CD4-positive, alpha-beta T cell (primary cell): ENCODE measurements at regions of chr2 and their contacts with region 1.

Region 1: GRCh38 chr2:222903234-222904220 is 42.7 kb downstream of the ACSL3 start:
- DNase-seq: peak in 9 of 14 experiments; percentile 1 to 65 (median 17)
- ATAC-seq: peak; percentile 60
- H3K4me3 ChIP-seq: no peak overlapping the region
- H3K4me3 Mint-ChIP-seq: no peak overlapping the region
- H3K27ac ChIP-seq: no peak overlapping the region
- H3K27ac Mint-ChIP-seq: peak overlapping the region; percentile 13
- H3K4me1 ChIP-seq: no peaks in the 10 kb centered on the region
- H3K4me1 Mint-ChIP-seq: peaks cover 45% of the 10 kb centered on the region
- H3K27me3 ChIP-seq: no peaks in the 10 kb centered on the region
- H3K27me3 Mint-ChIP-seq: no peaks in the 10 kb centered on the region
- CTCF ChIP-seq: peak; percentile 69

Region 2: DNA sequence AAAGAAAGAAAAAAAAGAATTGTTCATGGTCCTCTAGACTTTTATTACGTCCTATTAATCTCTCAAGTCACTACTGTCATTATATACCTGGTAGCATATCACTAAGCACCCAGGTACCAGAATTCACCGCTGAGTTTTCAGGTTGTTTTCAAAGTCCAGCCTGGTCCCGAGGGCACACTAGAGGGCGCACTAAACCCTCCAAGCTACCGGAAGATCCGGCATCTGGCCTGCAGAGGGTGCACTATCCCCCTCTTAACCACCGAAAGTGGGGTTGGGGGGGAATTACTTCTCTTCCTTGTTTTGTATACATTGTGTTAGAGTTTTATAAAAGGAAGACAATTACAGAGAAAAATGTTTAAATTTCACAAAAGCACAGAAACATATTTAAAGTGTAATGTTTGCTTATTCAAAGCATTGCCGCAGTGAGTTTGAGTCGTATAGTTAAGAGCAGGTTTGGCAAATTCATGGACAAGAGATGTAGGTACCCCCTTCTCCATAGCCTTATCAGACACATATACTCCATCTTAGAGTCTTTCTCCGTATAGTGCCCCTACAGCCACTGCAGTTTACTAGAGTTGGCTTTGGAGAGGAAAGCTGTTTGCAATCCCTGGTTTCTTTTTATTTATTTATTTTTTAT is 212.8 kb before region 1 on chr2:
- CTCF ChIA-PET with region 1: interaction called, 6 read pairs
- POLR2A ChIA-PET with region 1: no interaction called
- intact Hi-C with region 1: loop called in 1 of 2 experiments (anchors 1 kb)
- DNase-seq: peak; percentile 52 to 86 (median 64)
- ATAC-seq: peak; percentile 99
- H3K4me3 ChIP-seq: no peak overlapping the region
- H3K4me3 Mint-ChIP-seq: no peak overlapping the region
- H3K27ac ChIP-seq: no peak overlapping the region
- H3K27ac Mint-ChIP-seq: no peak overlapping the region
- H3K4me1 ChIP-seq: peaks cover 8% of the 10 kb centered on the region
- H3K4me1 Mint-ChIP-seq: peaks cover 16% of the 10 kb centered on the region
- H3K27me3 ChIP-seq: no peaks in the 10 kb centered on the region
- H3K27me3 Mint-ChIP-seq: peaks cover 20% of the 10 kb centered on the region
- CTCF ChIP-seq: peak; percentile 96

Region 3: DNA sequence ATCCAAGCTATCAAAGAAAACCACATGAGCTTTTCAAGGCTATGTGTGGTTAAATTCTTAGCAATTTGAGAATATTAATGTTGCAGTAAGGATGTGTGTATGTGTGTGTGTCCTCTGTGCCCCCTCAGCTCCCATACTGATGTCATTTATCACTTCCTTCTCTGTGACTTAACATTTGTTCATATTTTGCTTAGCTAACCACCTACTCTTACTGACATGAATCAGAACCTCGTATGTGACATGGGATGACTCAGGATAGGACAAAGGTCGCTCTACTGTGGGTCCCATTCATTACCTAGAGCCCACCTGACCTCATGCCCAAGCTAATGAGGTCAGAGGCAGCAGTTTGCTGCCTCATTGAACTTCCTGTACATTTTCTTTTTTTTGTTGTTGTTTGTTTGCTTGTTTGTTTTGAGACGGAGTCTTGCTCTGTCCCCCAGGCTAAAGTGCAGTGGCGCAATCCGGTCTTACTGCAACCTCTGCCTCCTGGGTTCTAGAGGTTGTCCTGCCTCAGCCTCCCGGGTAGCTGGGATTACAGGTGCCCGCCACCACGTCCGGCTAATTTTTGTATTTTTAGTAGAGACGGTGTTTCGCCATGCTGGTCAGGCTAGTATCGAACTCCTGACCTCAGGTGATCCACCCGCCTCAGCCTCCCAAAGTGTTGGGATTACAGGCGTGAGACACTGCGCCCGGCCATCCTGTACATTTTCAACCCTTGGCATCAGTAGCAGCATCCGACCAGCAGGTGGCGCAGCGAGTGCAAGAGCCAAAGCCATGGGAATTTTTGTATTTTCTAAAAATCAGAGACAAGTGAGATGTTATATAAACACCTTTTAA is 195.6 kb before region 1 on chr2:
- CTCF ChIA-PET with region 1: interaction called, 3 read pairs
- POLR2A ChIA-PET with region 1: no interaction called
- intact Hi-C with region 1: loop called (anchors 1 kb)
- DNase-seq: peak; percentile 58 to 83 (median 67)
- ATAC-seq: peak; percentile 71
- H3K4me3 ChIP-seq: no peak overlapping the region
- H3K4me3 Mint-ChIP-seq: no peak overlapping the region
- H3K27ac ChIP-seq: no peak overlapping the region
- H3K27ac Mint-ChIP-seq: no peak overlapping the region
- H3K4me1 ChIP-seq: peaks cover 4% of the 10 kb centered on the region
- H3K4me1 Mint-ChIP-seq: no peaks in the 10 kb centered on the region
- H3K27me3 ChIP-seq: peaks cover 6 to 12% of the 10 kb centered on the region in 2 experiments
- H3K27me3 Mint-ChIP-seq: peaks cover 69% of the 10 kb centered on the region
- CTCF ChIP-seq: peak; percentile 97

Region 4: DNA sequence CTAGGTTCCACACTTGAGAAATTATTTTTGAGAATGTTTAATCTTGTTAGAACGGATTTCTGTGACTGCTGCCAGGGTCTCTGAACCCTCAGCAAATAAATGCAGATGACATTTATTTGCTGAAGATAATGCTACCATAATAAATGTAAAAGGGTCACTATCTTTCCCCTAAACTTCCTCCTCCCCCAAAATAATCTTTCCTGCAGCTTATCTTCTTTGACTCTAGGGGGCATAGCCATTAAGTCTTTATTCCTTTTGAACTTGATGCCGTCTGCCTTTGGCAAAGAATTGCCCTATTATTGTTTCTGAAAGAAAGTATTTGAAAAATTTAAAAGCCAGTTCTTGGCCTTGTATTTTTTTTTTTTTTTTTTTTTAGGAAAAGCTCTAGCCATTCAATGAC is 106.3 kb before region 1 on chr2:
- CTCF ChIA-PET with region 1: interaction called, 4 read pairs
- POLR2A ChIA-PET with region 1: no interaction called
- intact Hi-C with region 1: loop called in 1 of 2 experiments (anchors 5 kb)
- DNase-seq: no peak
- ATAC-seq: no peak
- H3K4me3 ChIP-seq: no peak overlapping the region
- H3K4me3 Mint-ChIP-seq: no peak overlapping the region
- H3K27ac ChIP-seq: no peak overlapping the region
- H3K27ac Mint-ChIP-seq: no peak overlapping the region
- H3K4me1 ChIP-seq: no peaks in the 10 kb centered on the region
- H3K4me1 Mint-ChIP-seq: no peaks in the 10 kb centered on the region
- H3K27me3 ChIP-seq: no peaks in the 10 kb centered on the region
- H3K27me3 Mint-ChIP-seq: peaks cover under 1% of the 10 kb centered on the region
- CTCF ChIP-seq: peak; percentile 24

Region 5: GRCh38 chr2:222860740-222861410 is 42.7 kb before region 1 on chr2 and contains the start of gene ACSL3:
- CTCF ChIA-PET with region 1: no interaction called
- POLR2A ChIA-PET with region 1: interaction called, 3 read pairs
- intact Hi-C with region 1: loop called in 1 of 2 experiments (anchors 2 kb)
- DNase-seq: peak; percentile 82 to 94 (median 89)
- ATAC-seq: peak; percentile 98
- H3K4me3 ChIP-seq: peak within 1 kb of the TSS; percentile 76
- H3K4me3 Mint-ChIP-seq: peak within 1 kb of the TSS; percentile 88
- H3K27ac ChIP-seq: peak within 1 kb of the TSS in 1 of 2 donors; percentile 72
- H3K27ac Mint-ChIP-seq: peak within 1 kb of the TSS; percentile 74
- H3K4me1 ChIP-seq: peaks cover 17% of the 10 kb centered on the region
- H3K4me1 Mint-ChIP-seq: peaks cover 13% of the 10 kb centered on the region
- H3K27me3 ChIP-seq: no peaks in the 10 kb centered on the region
- H3K27me3 Mint-ChIP-seq: no peaks in the 10 kb centered on the region
- CTCF ChIP-seq: no peak
- total RNA-seq, gene ACSL3: 65.5 to 66.6 TPM

Region 6: GRCh38 chr2:222892321-222892720 is 11.2 kb before region 1 on chr2:
- CTCF ChIA-PET with region 1: no interaction called
- POLR2A ChIA-PET with region 1: no interaction called
- intact Hi-C with region 1: no loop called
- DNase-seq: peak in 3 of 14 experiments; percentile 11 to 20 (median 16)
- ATAC-seq: no peak
- H3K4me3 ChIP-seq: no peak overlapping the region
- H3K4me3 Mint-ChIP-seq: no peak overlapping the region
- H3K27ac ChIP-seq: no peak overlapping the region
- H3K27ac Mint-ChIP-seq: no peak overlapping the region
- H3K4me1 ChIP-seq: no peaks in the 10 kb centered on the region
- H3K4me1 Mint-ChIP-seq: peaks cover 48% of the 10 kb centered on the region
- H3K27me3 ChIP-seq: no peaks in the 10 kb centered on the region
- H3K27me3 Mint-ChIP-seq: no peaks in the 10 kb centered on the region
- CTCF ChIP-seq: no peak